Activated CD8-positive, alpha-beta T cell treated with anti-CD3 and anti-CD28 coated beads for 36 hours (primary cell): ENCODE measurements at regions of chr1 and their contacts with region 1.

Region 1: GRCh38 chr1:181424786-181425403 is 58.4 kb upstream of the CACNA1E start:
- DNase-seq: peak; percentile 89
- ATAC-seq: peak; percentile 80
- H3K4me3 Mint-ChIP-seq: no peak overlapping the region
- H3K27ac Mint-ChIP-seq: no peak overlapping the region
- H3K4me1 Mint-ChIP-seq: peaks cover 13% of the 10 kb centered on the region
- H3K27me3 Mint-ChIP-seq: peaks cover 13% of the 10 kb centered on the region
- CTCF ChIP-seq: peak; percentile 99

Region 2: DNA sequence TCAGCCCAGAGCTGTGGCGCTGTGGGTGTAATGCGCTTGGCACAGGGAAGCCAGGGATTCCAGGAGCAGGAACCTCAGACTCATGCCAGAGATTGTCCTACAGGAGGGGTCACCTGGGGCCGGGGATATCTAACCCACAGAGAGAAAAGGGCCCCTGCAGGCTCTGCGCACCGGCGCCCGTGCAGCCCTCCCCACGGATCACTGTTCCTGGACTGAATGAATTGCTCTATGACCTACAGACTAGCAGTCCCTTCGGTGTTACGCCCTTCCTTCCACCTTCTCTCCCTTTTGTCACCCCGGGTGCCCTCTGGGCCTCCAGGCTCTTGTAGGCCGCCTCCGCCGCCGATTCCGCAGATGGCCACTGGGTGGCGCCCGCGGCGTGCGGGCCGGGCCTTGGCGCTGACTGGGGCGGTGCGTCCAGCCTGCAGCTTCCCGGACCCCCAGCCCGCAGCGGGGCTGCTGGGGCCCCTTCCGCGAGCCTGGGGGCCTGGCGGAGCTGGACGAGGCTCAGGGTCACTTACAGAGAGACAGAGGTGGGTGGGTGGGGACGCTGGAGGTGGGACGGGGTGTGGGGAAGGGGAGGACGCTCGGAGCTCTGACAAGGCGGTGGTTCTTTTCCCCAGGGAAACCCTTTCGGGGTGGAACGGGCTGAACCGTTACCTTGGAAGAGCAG is 235.1 kb before region 1 on chr1:
- CTCF ChIA-PET with region 1: interaction called, 62 read pairs
- POLR2A ChIA-PET with region 1: no interaction called
- intact Hi-C with region 1: loop called (anchors 1 kb)
- DNase-seq: peak; percentile 79
- ATAC-seq: peak; percentile 94
- H3K4me3 Mint-ChIP-seq: no peak overlapping the region
- H3K27ac Mint-ChIP-seq: no peak overlapping the region
- H3K4me1 Mint-ChIP-seq: no peaks in the 10 kb centered on the region
- H3K27me3 Mint-ChIP-seq: peaks cover 2% of the 10 kb centered on the region
- CTCF ChIP-seq: peak; percentile 96

Region 3: DNA sequence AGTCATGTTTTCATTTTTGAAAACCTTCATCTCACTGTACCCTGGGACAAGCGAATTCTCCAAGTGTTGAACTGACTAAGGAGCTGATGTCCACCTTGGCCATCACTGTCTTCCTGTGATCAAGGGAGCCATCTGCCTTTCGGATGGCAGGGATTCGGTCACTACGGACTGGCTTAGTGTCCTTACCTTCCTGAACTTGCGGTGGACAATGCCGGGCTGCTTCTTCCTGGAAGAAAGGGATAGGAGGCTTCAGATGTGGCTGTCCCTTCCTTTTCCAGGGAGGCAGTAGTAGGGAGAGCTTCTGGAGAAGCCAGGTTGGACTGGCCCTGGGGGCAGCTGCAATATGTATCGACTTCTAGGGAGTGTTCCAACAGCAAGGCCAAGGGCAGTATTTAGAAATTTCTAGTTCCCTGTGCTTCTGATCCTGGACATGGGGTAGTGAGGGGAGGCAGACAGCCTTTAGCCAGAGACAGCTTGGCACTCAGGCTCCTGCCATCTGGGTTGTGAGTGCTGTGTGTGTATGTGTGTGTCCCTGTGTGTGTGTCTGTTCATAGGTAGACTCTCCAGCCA is 221.8 kb before region 1 on chr1:
- CTCF ChIA-PET with region 1: interaction called, 11 read pairs
- POLR2A ChIA-PET with region 1: no interaction called
- intact Hi-C with region 1: no loop called
- DNase-seq: no peak
- ATAC-seq: no peak
- H3K4me3 Mint-ChIP-seq: no peak overlapping the region
- H3K27ac Mint-ChIP-seq: no peak overlapping the region
- H3K4me1 Mint-ChIP-seq: no peaks in the 10 kb centered on the region
- H3K27me3 Mint-ChIP-seq: peaks cover 1% of the 10 kb centered on the region
- CTCF ChIP-seq: no peak

Region 4: DNA sequence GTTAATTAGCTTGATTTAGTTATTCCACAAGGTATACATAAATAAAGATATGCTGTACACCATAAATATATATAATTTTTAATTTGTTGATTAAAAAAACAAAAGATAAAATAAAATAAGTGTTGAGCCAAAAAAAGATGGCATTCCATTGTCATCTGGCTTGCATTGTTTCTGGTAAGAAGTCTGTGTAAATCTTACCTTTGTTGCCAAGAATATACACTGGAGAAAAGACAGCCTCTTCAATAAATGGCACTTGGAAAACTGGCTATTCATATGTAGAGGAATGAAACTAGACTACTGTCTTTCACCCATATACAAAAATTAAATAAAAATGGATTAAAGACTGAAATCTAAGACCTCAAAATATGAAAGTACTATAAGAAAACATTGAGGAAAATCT is 139.9 kb before region 1 on chr1:
- CTCF ChIA-PET with region 1: no interaction called
- POLR2A ChIA-PET with region 1: no interaction called
- intact Hi-C with region 1: no loop called
- DNase-seq: no peak
- ATAC-seq: no peak
- H3K4me3 Mint-ChIP-seq: no peak overlapping the region
- H3K27ac Mint-ChIP-seq: no peak overlapping the region
- H3K4me1 Mint-ChIP-seq: no peaks in the 10 kb centered on the region
- H3K27me3 Mint-ChIP-seq: no peaks in the 10 kb centered on the region
- CTCF ChIP-seq: no peak

Region 5: GRCh38 chr1:181324797-181325616 is 99.9 kb before region 1 on chr1:
- CTCF ChIA-PET with region 1: interaction called, 6 read pairs
- POLR2A ChIA-PET with region 1: no interaction called
- intact Hi-C with region 1: loop called (anchors 5 kb)
- DNase-seq: peak; percentile 82
- ATAC-seq: peak; percentile 99
- H3K4me3 Mint-ChIP-seq: no peak overlapping the region
- H3K27ac Mint-ChIP-seq: peak overlapping the region; percentile 25
- H3K4me1 Mint-ChIP-seq: peaks cover 11% of the 10 kb centered on the region
- H3K27me3 Mint-ChIP-seq: peaks cover 3% of the 10 kb centered on the region
- CTCF ChIP-seq: no peak

Region 6: GRCh38 chr1:181396171-181396670 is 28.7 kb before region 1 on chr1:
- CTCF ChIA-PET with region 1: interaction called, 10 read pairs
- POLR2A ChIA-PET with region 1: interaction called, 3 read pairs
- intact Hi-C with region 1: no loop called
- DNase-seq: peak; percentile 79
- ATAC-seq: peak; percentile 83
- H3K4me3 Mint-ChIP-seq: no peak overlapping the region
- H3K27ac Mint-ChIP-seq: no peak overlapping the region
- H3K4me1 Mint-ChIP-seq: peaks cover 47% of the 10 kb centered on the region
- H3K27me3 Mint-ChIP-seq: no peaks in the 10 kb centered on the region
- CTCF ChIP-seq: no peak